Activated CD4-positive, alpha-beta T cell treated with anti-CD3 and anti-CD28 coated beads, Interleukin-2, amount 10 ng/mL, durations not matched to agents 24 days and 14 days (primary cell): ENCODE measurements at regions of chr4 and their contacts with region 1.

Region 1: DNA sequence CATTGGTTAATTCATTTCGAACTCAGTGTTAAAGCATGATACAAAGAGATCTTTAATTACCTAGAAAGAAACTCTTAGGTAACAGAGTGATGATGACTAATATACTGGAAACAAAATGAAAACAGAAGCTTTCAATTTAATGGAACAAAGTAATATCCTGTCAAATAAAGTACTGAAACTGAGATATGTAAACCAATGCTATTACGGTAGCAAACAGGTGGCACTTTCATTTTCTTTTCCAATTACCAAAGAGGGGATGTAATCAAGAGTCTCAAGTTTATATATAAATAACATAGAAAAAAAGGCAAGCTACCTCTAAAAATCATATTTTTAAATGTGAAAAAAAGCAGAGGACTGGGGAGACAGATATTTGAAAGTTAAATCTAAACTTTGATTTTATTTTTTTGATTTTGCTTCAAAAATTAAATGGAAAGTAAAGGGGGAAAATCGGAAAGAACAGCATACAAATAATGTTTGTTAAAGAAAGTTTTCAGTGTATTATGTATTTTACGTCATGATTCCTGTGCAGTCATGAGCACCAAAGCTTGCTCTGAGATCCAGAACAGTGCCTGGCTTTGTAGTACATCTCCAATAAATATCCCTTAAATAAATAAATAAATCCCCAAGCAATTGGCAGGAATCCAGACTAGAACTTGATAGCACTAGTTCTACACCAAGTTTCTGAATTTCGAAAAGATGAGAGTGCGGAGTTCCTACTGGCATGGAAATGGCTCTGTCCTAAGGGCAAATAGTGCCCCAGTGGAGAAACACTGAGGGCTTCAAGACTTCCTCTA is 25.0 kb upstream of the RAPGEF2 start:
- DNase-seq: no peak
- H3K4me3 Mint-ChIP-seq: peak overlapping the region; percentile 16
- H3K27ac Mint-ChIP-seq: peak overlapping the region; percentile 6
- H3K4me1 Mint-ChIP-seq: peaks cover 10% of the 10 kb centered on the region
- H3K27me3 Mint-ChIP-seq: no peaks in the 10 kb centered on the region

Region 2: GRCh38 chr4:159047478-159048165 is 30.3 kb before region 1 on chr4:
- intact Hi-C with region 1: loop called (anchors 1 kb)
- DNase-seq: peak; percentile 78
- H3K4me3 Mint-ChIP-seq: peak overlapping the region; percentile 6
- H3K27ac Mint-ChIP-seq: peak overlapping the region; percentile 62
- H3K4me1 Mint-ChIP-seq: peaks cover 26% of the 10 kb centered on the region
- H3K27me3 Mint-ChIP-seq: peaks cover 6% of the 10 kb centered on the region

Region 3: GRCh38 chr4:159487284-159487747 is 409.4 kb after region 1 on chr4:
- intact Hi-C with region 1: no loop called
- DNase-seq: peak; percentile 76
- H3K4me3 Mint-ChIP-seq: no peak overlapping the region
- H3K27ac Mint-ChIP-seq: no peak overlapping the region
- H3K4me1 Mint-ChIP-seq: no peaks in the 10 kb centered on the region
- H3K27me3 Mint-ChIP-seq: peaks cover 11% of the 10 kb centered on the region